ENCODE measurements at regions of chr2 and their contacts with region 1.

Region 1: DNA sequence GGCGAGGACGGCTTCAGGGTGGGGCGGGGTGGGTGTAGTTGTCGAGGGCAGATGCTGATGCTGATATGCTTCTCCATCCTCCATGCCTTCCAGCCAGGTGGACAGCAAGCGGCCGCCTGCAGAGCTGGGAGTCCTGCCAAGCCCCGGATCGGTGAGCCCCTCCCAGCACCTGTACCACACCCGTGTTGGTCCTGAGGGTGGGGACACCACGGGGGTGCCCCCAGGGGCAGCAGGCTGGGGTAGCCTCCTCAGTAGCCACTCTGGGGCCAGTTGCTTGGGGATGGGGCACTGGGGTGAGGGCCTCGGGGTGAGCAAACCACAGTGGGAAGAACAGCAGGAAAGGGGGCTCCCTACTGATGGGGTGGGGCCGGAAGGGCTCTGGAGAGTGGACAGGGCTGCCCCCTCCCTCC is 2.6 kb downstream of the ANO7 start:
- DNase-seq: no peak
- ATAC-seq: no peak
- H3K4me3 ChIP-seq: no peak overlapping the region
- H3K4me3 Mint-ChIP-seq: no peak overlapping the region
- H3K27ac ChIP-seq: no peak overlapping the region
- H3K27ac Mint-ChIP-seq: no peak overlapping the region
- H3K4me1 ChIP-seq: no peaks in the 10 kb centered on the region
- H3K4me1 Mint-ChIP-seq: no peaks in the 10 kb centered on the region
- H3K27me3 ChIP-seq: no peaks in the 10 kb centered on the region
- H3K27me3 Mint-ChIP-seq: no peaks in the 10 kb centered on the region

Region 2: GRCh38 chr2:240739797-240740196 is 451.3 kb before region 1 on chr2:
- CTCF ChIA-PET with region 1: no interaction called
- POLR2A ChIA-PET with region 1: no interaction called
- DNase-seq: peak in 33 of 35 experiments; percentile 3 to 47 (median 29)
- ATAC-seq: peak; percentile 59 to 92 (median 66)
- H3K4me3 ChIP-seq: peak overlapping the region in 1 of 2 donors; percentile 1
- H3K4me3 Mint-ChIP-seq: peak overlapping the region in 2 of 3 donors; percentile 34 to 55
- H3K27ac ChIP-seq: peak overlapping the region; percentile 34
- H3K27ac Mint-ChIP-seq: peak overlapping the region in 1 of 2 donors; percentile 39
- H3K4me1 ChIP-seq: peaks cover 0 to 9% of the 10 kb centered on the region in 2 experiments
- H3K4me1 Mint-ChIP-seq: peaks cover 7 to 10% (median 7%) of the 10 kb centered on the region in 3 donors
- H3K27me3 ChIP-seq: peaks cover 0 to 22% of the 10 kb centered on the region in 2 experiments
- H3K27me3 Mint-ChIP-seq: peaks cover 0 to 2% of the 10 kb centered on the region in 2 donors

Region 3: GRCh38 chr2:241135737-241136136 is 55.4 kb before region 1 on chr2:
- CTCF ChIA-PET with region 1: no interaction called
- POLR2A ChIA-PET with region 1: no interaction called
- DNase-seq: no peak
- ATAC-seq: no peak
- H3K4me3 ChIP-seq: no peak overlapping the region
- H3K4me3 Mint-ChIP-seq: no peak overlapping the region
- H3K27ac ChIP-seq: no peak overlapping the region
- H3K27ac Mint-ChIP-seq: no peak overlapping the region
- H3K4me1 ChIP-seq: no peaks in the 10 kb centered on the region
- H3K4me1 Mint-ChIP-seq: no peaks in the 10 kb centered on the region
- H3K27me3 ChIP-seq: no peaks in the 10 kb centered on the region
- H3K27me3 Mint-ChIP-seq: no peaks in the 10 kb centered on the region

Region 4: DNA sequence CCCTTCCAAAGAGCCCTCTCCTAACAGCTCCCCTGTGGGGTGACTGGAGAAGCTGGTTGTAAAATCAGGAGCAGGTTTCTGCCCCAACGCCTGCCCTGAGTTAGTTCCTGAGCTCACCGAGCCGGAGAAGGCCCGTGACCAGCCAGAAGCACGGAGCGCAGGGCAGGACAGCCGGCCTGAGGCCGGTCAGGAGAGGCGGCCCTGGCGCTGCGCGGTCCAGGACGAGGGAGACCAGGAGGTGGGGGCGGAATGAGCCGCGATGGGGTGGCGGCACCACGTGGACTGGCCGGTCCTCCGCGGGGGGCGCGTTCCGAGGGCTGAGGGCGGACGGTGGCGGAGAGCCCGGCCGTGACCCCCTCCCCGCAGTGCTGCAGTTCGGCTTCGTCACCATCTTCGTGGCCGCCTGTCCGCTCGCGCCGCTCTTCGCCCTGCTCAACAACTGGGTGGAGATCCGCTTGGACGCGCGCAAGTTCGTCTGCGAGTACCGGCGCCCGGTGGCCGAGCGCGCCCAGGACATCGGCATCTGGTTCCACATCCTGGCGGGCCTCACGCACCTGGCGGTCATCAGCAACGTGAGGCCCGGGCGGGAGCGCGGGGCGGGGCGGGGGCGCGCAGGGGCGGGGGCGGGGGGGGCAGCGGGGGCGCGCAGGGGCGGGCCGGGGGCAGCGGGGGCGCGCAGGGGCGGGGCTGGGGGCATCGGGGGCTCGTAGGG is 26.4 kb after region 1 on chr2:
- CTCF ChIA-PET with region 1: no interaction called
- POLR2A ChIA-PET with region 1: no interaction called
- DNase-seq: peak in 17 of 35 experiments; percentile 8 to 55 (median 17)
- ATAC-seq: peak; percentile 21 to 34 (median 30)
- H3K4me3 ChIP-seq: peak overlapping the region in 1 of 2 donors; percentile 40
- H3K4me3 Mint-ChIP-seq: peak overlapping the region; percentile 66 to 90 (median 78)
- H3K27ac ChIP-seq: no peak overlapping the region
- H3K27ac Mint-ChIP-seq: peak overlapping the region; percentile 34 to 57
- H3K4me1 ChIP-seq: peaks cover 0 to 11% of the 10 kb centered on the region in 2 experiments
- H3K4me1 Mint-ChIP-seq: peaks cover 12 to 14% (median 14%) of the 10 kb centered on the region in 3 donors
- H3K27me3 ChIP-seq: peaks cover 4 to 9% of the 10 kb centered on the region in 2 experiments
- H3K27me3 Mint-ChIP-seq: no peaks in the 10 kb centered on the region

Region 5: GRCh38 chr2:241842620-241843211 is 651.6 kb after region 1 on chr2:
- CTCF ChIA-PET with region 1: no interaction called
- POLR2A ChIA-PET with region 1: interaction called in 1 of 2 experiments, 10 read pairs
- DNase-seq: peak in 29 of 35 experiments; percentile 20 to 70 (median 45)
- ATAC-seq: peak in 3 of 4 experiments; percentile 12 to 57 (median 14)
- H3K4me3 ChIP-seq: peak overlapping the region; percentile 21 to 34
- H3K4me3 Mint-ChIP-seq: peak overlapping the region; percentile 67 to 77 (median 75)
- H3K27ac ChIP-seq: peak overlapping the region; percentile 71
- H3K27ac Mint-ChIP-seq: peak overlapping the region; percentile 82 to 83
- H3K4me1 ChIP-seq: peaks cover 11 to 34% of the 10 kb centered on the region in 2 experiments
- H3K4me1 Mint-ChIP-seq: peaks cover 35 to 39% (median 38%) of the 10 kb centered on the region in 3 donors
- H3K27me3 ChIP-seq: peaks cover 0 to 3% of the 10 kb centered on the region in 2 experiments
- H3K27me3 Mint-ChIP-seq: peaks cover 0 to 2% of the 10 kb centered on the region in 2 donors